Endothelial cell of umbilical vein (primary cell): ENCODE measurements at regions of chr4 and their contacts with region 1.

Region 1: DNA sequence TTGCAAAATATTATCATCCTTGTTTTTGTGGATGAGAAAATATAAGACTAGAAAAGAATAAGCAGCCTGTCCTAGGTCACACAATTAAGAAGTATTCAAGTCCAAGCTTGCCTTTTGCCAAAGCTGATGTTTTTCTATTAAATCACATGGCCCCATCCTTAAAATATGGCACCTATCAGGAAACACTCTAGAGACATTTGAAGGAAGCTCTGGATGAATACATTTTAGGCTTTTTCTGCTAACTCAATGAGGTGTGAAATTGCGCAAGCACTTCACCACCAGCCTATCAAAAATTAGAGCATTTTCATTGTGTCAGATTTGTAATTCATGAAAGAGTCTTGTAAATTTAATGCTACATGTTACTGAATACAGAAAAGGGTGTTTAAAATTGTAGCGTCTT is 251.1 kb upstream of the MAD2L1 start:
- DNase-seq: no peak
- H3K4me3 ChIP-seq: no peak overlapping the region
- H3K27ac ChIP-seq: no peak overlapping the region
- H3K4me1 ChIP-seq: no peaks in the 10 kb centered on the region
- H3K27me3 ChIP-seq: no peaks in the 10 kb centered on the region
- CTCF ChIP-seq: no peak
- POLR2A ChIP-seq: no peak

Region 2: GRCh38 chr4:120331486-120332370 is 14.0 kb after region 1 on chr4:
- CTCF ChIA-PET with region 1: interaction called, 3 read pairs
- POLR2A ChIA-PET with region 1: no interaction called
- dilution Hi-C with region 1: no loop called
- intact Hi-C with region 1: loop called (anchors 2 kb)
- DNase-seq: no peak
- H3K4me3 ChIP-seq: no peak overlapping the region
- H3K27ac ChIP-seq: no peak overlapping the region
- H3K4me1 ChIP-seq: no peaks in the 10 kb centered on the region
- H3K27me3 ChIP-seq: no peaks in the 10 kb centered on the region
- CTCF ChIP-seq: no peak
- POLR2A ChIP-seq: no peak

Region 3: DNA sequence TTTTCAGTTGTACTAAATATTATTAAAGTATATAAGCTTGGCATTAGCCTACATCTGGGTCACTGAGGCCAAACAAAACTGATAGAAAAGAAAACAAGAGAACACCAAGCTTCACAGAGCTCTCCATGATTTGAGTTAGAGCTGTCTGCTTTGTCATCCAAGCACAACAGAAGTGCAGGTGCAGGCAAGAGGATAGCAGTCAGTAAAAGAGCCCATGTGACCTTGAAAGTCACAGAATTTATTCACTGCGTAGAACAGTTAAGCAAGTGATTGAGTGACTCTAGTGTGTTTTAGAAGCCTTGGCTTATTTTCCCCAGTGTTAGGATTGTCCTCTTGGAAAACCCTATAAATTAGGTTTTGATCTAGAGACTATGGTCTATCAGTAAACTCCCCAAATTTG is 654.2 kb after region 1 on chr4:
- CTCF ChIA-PET with region 1: no interaction called
- POLR2A ChIA-PET with region 1: no interaction called
- dilution Hi-C with region 1: no loop called
- intact Hi-C with region 1: no loop called
- DNase-seq: no peak
- H3K4me3 ChIP-seq: no peak overlapping the region
- H3K27ac ChIP-seq: no peak overlapping the region
- H3K4me1 ChIP-seq: no peaks in the 10 kb centered on the region
- H3K27me3 ChIP-seq: no peaks in the 10 kb centered on the region
- CTCF ChIP-seq: no peak
- POLR2A ChIP-seq: no peak